ENCODE measurements at regions of chr10 and their contacts with region 1.

Region 1: DNA sequence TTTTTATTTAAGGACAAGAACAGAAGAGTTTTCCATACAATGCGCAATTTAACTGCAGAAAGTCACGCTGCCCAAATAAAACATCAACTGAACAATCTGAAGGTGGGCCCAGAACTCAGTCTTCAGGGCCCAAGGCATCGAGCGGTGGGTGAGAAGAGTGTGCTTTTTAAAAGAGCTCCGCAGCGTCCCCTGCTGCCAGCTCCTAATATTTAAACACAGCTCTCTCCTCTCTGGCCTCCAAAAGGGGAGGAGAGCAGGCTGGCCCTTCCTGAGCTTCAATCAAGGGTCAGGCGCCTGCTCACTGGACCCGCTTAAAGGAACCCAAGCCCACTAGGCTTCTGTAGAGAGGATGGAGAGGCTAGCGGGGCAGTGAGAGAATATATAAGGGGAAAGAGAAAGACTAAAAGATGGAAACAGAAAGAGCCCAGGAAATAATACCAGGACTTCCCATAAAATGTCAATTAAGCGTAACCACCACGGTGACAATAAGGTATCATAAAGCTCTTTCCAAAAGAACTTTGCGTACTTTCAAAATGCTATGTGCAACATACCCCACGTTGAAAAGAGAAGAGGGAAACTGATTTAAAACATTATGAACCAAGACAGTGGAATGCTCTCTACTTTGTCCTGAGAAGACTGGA is 2.8 kb downstream of the FAM53B start:
- DNase-seq: peak; percentile 82
- H3K4me3 Mint-ChIP-seq: peak overlapping the region; percentile 95
- H3K27ac Mint-ChIP-seq: peak overlapping the region; percentile 77
- H3K4me1 Mint-ChIP-seq: peaks cover 71% of the 10 kb centered on the region
- H3K27me3 Mint-ChIP-seq: peaks cover 2% of the 10 kb centered on the region

Region 2: GRCh38 chr10:124539935-124540641 is 201.3 kb before region 1 on chr10:
- CTCF ChIA-PET with region 1: interaction called, 82 read pairs
- POLR2A ChIA-PET with region 1: interaction called, 4 read pairs
- DNase-seq: peak; percentile 68
- H3K4me3 Mint-ChIP-seq: no peak overlapping the region
- H3K27ac Mint-ChIP-seq: no peak overlapping the region
- H3K4me1 Mint-ChIP-seq: no peaks in the 10 kb centered on the region
- H3K27me3 Mint-ChIP-seq: no peaks in the 10 kb centered on the region

Region 3: DNA sequence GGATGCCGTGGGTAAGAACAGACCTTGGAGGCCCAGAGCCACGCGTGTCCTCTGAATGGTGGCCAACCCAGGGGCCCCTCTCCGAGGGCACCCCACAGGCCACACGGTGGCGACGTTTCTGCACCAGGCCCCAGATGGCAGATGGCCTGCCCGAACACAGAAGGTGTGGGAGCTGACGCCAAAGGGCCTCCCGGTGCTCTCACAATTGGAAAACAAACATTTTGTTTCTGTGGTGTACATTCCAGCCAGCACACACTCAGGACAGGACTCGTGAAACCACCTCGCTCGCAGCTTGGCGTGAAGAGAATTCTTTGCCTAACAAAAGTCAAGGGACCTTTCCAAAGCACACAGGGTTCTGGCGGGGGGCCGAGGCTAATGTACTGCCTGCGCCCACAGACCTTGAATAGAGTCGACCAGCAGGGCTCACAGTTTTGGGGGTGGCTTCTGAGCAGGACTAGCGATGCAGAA is 109.3 kb before region 1 on chr10:
- CTCF ChIA-PET with region 1: interaction called, 59 read pairs
- POLR2A ChIA-PET with region 1: interaction called, 10 read pairs
- DNase-seq: peak; percentile 45
- H3K4me3 Mint-ChIP-seq: no peak overlapping the region
- H3K27ac Mint-ChIP-seq: no peak overlapping the region
- H3K4me1 Mint-ChIP-seq: peaks cover 46% of the 10 kb centered on the region
- H3K27me3 Mint-ChIP-seq: no peaks in the 10 kb centered on the region

Region 4: GRCh38 chr10:124688889-124689670 is 52.3 kb before region 1 on chr10:
- CTCF ChIA-PET with region 1: interaction called, 40 read pairs
- POLR2A ChIA-PET with region 1: interaction called, 48 read pairs
- DNase-seq: peak; percentile 83
- H3K4me3 Mint-ChIP-seq: peak overlapping the region; percentile 26
- H3K27ac Mint-ChIP-seq: peak overlapping the region; percentile 94
- H3K4me1 Mint-ChIP-seq: peaks cover 84% of the 10 kb centered on the region
- H3K27me3 Mint-ChIP-seq: no peaks in the 10 kb centered on the region

Region 5: DNA sequence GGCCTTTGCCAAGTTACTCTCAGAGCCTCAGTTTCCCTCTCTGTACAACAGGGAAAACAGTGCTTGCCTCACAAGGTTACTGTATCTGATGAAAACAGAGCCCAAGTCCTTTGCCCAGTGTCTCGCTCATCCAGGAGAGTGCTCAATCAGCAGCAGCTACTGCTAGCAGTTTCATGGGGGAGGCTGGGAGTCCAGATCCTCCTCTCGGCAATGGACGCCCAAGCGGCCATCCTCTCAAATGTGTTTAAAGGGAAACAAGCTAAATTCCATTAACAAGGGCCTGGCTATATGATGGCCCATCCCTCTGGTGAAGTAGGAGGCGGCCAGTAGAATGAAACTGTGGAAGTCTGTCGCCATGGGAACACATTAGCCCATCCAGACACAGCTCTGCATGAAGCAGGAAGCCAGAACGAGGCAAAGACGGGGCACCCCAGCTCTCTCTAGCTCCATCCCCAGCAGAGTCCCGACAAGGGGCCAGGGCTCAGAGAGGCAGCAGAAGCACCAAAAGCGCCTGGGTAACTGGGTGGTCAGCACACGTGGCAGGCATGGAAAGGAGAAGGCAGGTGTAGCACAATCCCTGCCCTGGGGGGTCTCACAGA is 32.4 kb before region 1 on chr10:
- CTCF ChIA-PET with region 1: interaction called, 164 read pairs
- POLR2A ChIA-PET with region 1: interaction called, 238 read pairs
- DNase-seq: no peak
- H3K4me3 Mint-ChIP-seq: no peak overlapping the region
- H3K27ac Mint-ChIP-seq: peak overlapping the region; percentile 64
- H3K4me1 Mint-ChIP-seq: peaks cover 88% of the 10 kb centered on the region
- H3K27me3 Mint-ChIP-seq: no peaks in the 10 kb centered on the region

Region 6: DNA sequence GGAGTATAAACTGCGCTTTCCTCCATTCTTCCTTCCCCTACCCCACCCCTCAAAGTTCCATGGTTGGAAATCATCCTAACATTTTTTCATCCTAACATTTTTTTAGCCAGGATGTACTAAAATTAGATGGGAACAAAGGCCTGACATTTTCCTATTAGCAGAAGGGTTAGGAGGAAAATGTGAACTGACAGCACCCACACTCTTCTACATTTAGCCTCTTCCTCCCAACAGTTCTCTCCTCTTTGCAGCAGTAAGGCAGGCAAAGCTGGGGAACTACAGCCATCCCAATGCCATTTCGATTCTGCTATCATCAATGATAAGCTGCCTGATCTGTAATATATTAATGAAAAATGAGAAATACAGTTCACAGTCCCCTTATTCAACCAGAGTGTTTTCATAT is 14.2 kb after region 1 on chr10:
- CTCF ChIA-PET with region 1: interaction called, 10 read pairs
- POLR2A ChIA-PET with region 1: interaction called, 11 read pairs
- DNase-seq: no peak
- H3K4me3 Mint-ChIP-seq: no peak overlapping the region
- H3K27ac Mint-ChIP-seq: no peak overlapping the region
- H3K4me1 Mint-ChIP-seq: no peaks in the 10 kb centered on the region
- H3K27me3 Mint-ChIP-seq: no peaks in the 10 kb centered on the region

Measured in activated CD4-positive, alpha-beta memory T cell treated with anti-CD3 and anti-CD28 coated beads, Interleukin-2, amount 10 ng/mL, durations not matched to agents 7 days and 5 days (primary cell).